Esophagus squamous epithelium (tissue), 5 donors: ENCODE measurements at regions of chr20 and their contacts with region 1.

Region 1: DNA sequence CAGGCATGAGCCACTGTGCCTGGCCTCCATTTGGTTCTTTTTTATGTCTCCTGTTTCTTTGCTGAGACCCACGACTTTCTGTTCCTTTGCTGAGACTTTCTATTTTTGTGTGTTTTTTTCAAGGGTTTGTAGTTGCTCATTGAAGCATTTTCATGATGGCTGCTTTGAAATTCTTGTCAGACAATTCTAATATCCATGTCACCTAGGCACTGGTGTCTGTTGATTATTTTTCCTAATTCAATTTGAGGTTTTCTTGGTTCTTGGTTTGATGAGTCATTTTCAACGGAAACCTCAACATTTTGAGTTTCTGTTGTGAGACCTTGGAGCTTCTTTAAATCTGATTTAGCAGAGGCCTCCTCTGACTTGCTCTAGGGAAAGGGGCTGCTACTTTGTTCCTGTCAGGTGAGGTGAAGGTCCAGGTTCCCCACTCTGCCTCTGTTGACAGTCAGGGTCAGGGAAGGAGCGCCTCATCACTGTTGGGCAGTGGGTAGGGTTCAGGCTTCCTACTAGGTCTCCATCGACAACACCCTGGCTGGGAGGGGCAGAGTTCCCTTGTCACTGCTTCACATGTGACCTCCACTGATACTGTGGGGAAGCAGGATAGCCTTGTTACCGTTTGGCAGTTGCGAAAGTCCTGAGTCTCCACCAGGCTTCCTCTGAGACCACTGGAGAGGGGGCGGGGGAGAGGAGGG is 67.2 kb upstream of the RNF24 start:
- DNase-seq: no peak
- H3K4me3 ChIP-seq: peak overlapping the region in 1 of 4 donors; percentile 22
- H3K27ac ChIP-seq: peak overlapping the region in 3 of 4 donors; percentile 24 to 67 (median 43)
- H3K4me1 ChIP-seq: peaks cover 0 to 32% (median 11%) of the 10 kb centered on the region in 3 donors
- H3K27me3 ChIP-seq: no peaks in the 10 kb centered on the region
- CTCF ChIP-seq: no peak
- POLR2A ChIP-seq: no peak

Region 2: GRCh38 chr20:3679749-3680700 is 402.5 kb before region 1 on chr20:
- intact Hi-C with region 1: loop called (anchors 10 kb)
- DNase-seq: no peak
- H3K4me3 ChIP-seq: peak overlapping the region; percentile 27 to 77 (median 52)
- H3K27ac ChIP-seq: peak overlapping the region; percentile 80 to 95 (median 88)
- H3K4me1 ChIP-seq: peaks cover 15 to 55% (median 30%) of the 10 kb centered on the region in 3 donors
- H3K27me3 ChIP-seq: peaks cover 0 to 78% (median 5%) of the 10 kb centered on the region in 4 donors
- CTCF ChIP-seq: no peak
- POLR2A ChIP-seq: peak in 2 of 4 donors; percentile 30 to 42

Region 3: GRCh38 chr20:4018015-4018748 is 64.4 kb before region 1 on chr20:
- intact Hi-C with region 1: loop called (anchors 5 kb)
- DNase-seq: no peak
- H3K4me3 ChIP-seq: no peak overlapping the region
- H3K27ac ChIP-seq: peak overlapping the region in 2 of 4 donors; percentile 17 to 36
- H3K4me1 ChIP-seq: peaks cover 14 to 45% (median 24%) of the 10 kb centered on the region in 3 donors
- H3K27me3 ChIP-seq: peaks cover 0 to 5% (median 0%) of the 10 kb centered on the region in 4 donors
- CTCF ChIP-seq: no peak
- POLR2A ChIP-seq: no peak